ENCODE measurements at regions of chr5 and their contacts with region 1.

Region 1: GRCh38 chr5:164013077-164013670 is 507.8 kb downstream of the MAT2B start:
- DNase-seq: peak; percentile 51
- H3K4me3 ChIP-seq: no peak overlapping the region
- H3K27ac ChIP-seq: no peak overlapping the region
- H3K4me1 ChIP-seq: no peaks in the 10 kb centered on the region
- H3K27me3 ChIP-seq: peaks cover 3% of the 10 kb centered on the region
- CTCF ChIP-seq: peak; percentile 46 to 64

Region 2: GRCh38 chr5:163564321-163564938 is 448.7 kb before region 1 on chr5:
- CTCF ChIA-PET with region 1: interaction called, 4 read pairs
- dilution Hi-C with region 1: no loop called
- in situ Hi-C with region 1: loop called in 1 of 2 experiments (anchors 25 kb)
- intact Hi-C with region 1: loop called (anchors 2 kb)
- DNase-seq: peak; percentile 42
- H3K4me3 ChIP-seq: no peak overlapping the region
- H3K27ac ChIP-seq: no peak overlapping the region
- H3K4me1 ChIP-seq: peaks cover 9% of the 10 kb centered on the region
- H3K27me3 ChIP-seq: no peaks in the 10 kb centered on the region
- CTCF ChIP-seq: peak; percentile 77 to 90

Region 3: DNA sequence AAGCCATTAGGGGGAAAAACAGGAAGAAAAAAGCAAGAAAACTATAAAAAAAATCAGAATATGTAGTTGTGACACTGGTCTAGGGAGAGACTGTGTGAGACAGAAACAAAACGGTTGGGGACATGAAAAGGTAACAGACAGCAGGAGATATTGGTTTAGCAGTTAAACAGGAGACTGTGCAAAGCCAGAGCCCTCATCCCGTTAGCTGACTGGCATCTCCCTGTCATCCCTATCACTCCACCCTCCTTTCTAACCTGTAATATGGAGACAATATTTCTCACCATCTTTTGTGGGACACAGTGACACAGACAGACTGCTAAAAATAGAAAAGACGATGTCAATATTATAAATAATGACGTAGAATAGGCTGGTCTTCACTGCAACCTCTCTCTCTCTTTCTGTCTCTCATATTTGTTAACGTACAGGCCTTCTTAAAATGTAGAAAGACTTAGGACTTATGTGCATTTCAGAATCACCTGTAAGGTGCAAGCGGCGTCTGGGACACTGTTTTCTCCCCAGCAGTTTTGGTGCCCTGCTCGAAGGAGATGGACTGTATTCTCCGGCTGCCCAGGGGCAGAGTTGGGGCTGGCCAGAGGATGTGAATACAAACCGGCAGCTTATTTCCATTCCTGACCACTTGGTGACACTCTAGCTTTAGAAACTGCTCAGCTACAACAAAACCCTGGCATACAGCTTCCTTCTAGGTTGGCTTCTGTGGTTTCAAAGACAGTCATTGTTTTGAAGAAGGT is 317.2 kb before region 1 on chr5:
- CTCF ChIA-PET with region 1: interaction called, 3 read pairs
- dilution Hi-C with region 1: no loop called
- in situ Hi-C with region 1: no loop called
- intact Hi-C with region 1: loop called (anchors 2 kb)
- DNase-seq: peak; percentile 68
- H3K4me3 ChIP-seq: no peak overlapping the region
- H3K27ac ChIP-seq: no peak overlapping the region
- H3K4me1 ChIP-seq: peaks cover 3% of the 10 kb centered on the region
- H3K27me3 ChIP-seq: no peaks in the 10 kb centered on the region
- CTCF ChIP-seq: peak; percentile 78 to 81

Region 4: DNA sequence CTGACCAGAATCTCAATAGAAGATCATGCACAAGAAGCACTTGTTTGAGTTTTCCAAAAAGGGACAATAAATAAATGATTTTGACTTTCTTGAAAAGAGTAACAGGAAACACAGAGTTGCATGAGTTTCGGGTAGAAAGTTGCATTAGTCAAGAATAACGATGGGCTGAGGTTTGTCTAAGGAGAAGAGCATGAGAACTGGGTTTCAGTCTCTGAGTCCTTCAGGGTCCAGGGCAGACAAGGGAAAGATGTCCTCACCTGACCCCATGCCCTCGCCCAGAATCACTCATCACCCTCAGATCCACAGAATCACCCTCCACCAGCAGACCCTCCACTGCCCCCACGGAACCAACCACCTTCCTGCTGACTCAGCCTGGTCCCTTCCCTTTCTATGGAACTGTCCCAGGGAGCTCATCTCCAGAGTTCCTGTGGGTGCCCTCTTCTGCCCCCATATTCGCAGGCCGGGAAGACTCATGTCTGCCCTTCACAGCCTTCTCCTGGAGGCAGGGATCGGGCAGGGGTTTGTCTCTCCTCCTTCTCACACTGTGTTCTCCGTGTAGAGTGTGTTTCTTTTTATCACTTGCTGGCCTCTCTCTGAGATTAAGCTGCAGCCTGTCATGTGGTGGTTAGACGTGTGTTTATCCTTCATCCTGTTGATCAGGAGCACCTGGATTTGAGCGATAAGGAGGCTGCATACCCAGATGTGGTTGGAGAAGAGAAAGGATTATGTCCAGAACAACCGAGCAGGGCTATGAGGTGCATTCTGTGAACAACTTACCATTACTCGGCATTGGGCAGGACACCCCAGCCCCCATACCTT is 65.1 kb before region 1 on chr5:
- CTCF ChIA-PET with region 1: no interaction called
- dilution Hi-C with region 1: no loop called
- in situ Hi-C with region 1: no loop called
- intact Hi-C with region 1: no loop called
- DNase-seq: no peak
- H3K4me3 ChIP-seq: no peak overlapping the region
- H3K27ac ChIP-seq: no peak overlapping the region
- H3K4me1 ChIP-seq: no peaks in the 10 kb centered on the region
- H3K27me3 ChIP-seq: peaks cover 2% of the 10 kb centered on the region
- CTCF ChIP-seq: no peak

Region 5: GRCh38 chr5:164175083-164175482 is 161.9 kb after region 1 on chr5:
- CTCF ChIA-PET with region 1: no interaction called
- dilution Hi-C with region 1: no loop called
- in situ Hi-C with region 1: no loop called
- intact Hi-C with region 1: no loop called
- DNase-seq: peak; percentile 0
- H3K4me3 ChIP-seq: no peak overlapping the region
- H3K27ac ChIP-seq: no peak overlapping the region
- H3K4me1 ChIP-seq: no peaks in the 10 kb centered on the region
- H3K27me3 ChIP-seq: no peaks in the 10 kb centered on the region
- CTCF ChIP-seq: no peak

Region 6: GRCh38 chr5:164277720-164278119 is 264.5 kb after region 1 on chr5:
- CTCF ChIA-PET with region 1: no interaction called
- dilution Hi-C with region 1: no loop called
- in situ Hi-C with region 1: no loop called
- intact Hi-C with region 1: no loop called
- DNase-seq: peak; percentile 22
- H3K4me3 ChIP-seq: no peak overlapping the region
- H3K27ac ChIP-seq: no peak overlapping the region
- H3K4me1 ChIP-seq: no peaks in the 10 kb centered on the region
- H3K27me3 ChIP-seq: no peaks in the 10 kb centered on the region
- CTCF ChIP-seq: no peak

Region 7: DNA sequence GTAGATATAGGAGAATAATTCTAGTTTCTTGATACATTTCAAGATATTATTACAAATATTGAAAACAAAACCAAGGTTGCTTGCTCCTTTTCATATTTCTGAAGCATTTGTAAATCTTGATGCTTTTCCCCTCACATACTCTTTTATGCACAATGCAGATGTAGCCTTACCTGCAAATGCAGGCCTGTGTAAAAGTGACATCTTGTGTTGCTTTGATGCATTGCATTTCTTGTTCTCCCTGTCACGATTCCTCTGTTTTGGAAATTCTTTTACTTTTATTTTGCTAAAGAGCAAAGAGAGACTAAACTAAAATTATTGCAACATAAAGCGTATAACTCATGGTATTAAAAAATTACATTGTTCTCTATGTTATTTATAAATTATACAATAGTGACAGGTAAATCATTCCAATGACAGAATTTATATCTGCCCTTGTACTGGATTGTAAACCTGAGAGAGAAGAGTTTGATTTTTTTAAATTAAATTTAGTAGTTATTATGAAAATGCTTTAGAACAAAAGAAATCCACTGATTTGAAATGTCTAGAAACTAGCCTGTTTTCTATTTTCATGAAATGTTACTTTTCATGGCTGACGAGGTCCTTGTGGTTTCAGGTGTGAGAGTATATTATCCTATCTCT is 462.3 kb after region 1 on chr5:
- CTCF ChIA-PET with region 1: no interaction called
- dilution Hi-C with region 1: no loop called
- in situ Hi-C with region 1: loop called in 1 of 2 experiments (anchors 10 kb)
- intact Hi-C with region 1: loop called (anchors 1 kb)
- DNase-seq: peak; percentile 3
- H3K4me3 ChIP-seq: no peak overlapping the region
- H3K27ac ChIP-seq: no peak overlapping the region
- H3K4me1 ChIP-seq: no peaks in the 10 kb centered on the region
- H3K27me3 ChIP-seq: no peaks in the 10 kb centered on the region
- CTCF ChIP-seq: peak; percentile 70 to 82

Region 8: GRCh38 chr5:164504141-164504772 is 491.1 kb after region 1 on chr5:
- CTCF ChIA-PET with region 1: no interaction called
- dilution Hi-C with region 1: no loop called
- in situ Hi-C with region 1: no loop called
- intact Hi-C with region 1: loop called (anchors 1 kb)
- DNase-seq: peak; percentile 34
- H3K4me3 ChIP-seq: no peak overlapping the region
- H3K27ac ChIP-seq: no peak overlapping the region
- H3K4me1 ChIP-seq: no peaks in the 10 kb centered on the region
- H3K27me3 ChIP-seq: peaks cover 5% of the 10 kb centered on the region
- CTCF ChIP-seq: peak; percentile 75 to 84

Region 9: GRCh38 chr5:164672931-164673694 is 659.9 kb after region 1 on chr5:
- CTCF ChIA-PET with region 1: no interaction called
- dilution Hi-C with region 1: no loop called
- in situ Hi-C with region 1: no loop called
- intact Hi-C with region 1: loop called (anchors 1 kb)
- DNase-seq: peak; percentile 5
- H3K4me3 ChIP-seq: no peak overlapping the region
- H3K27ac ChIP-seq: no peak overlapping the region
- H3K4me1 ChIP-seq: no peaks in the 10 kb centered on the region
- H3K27me3 ChIP-seq: no peaks in the 10 kb centered on the region
- CTCF ChIP-seq: peak; percentile 28 to 50

Region 10: GRCh38 chr5:165457859-165458481 is 1444.8 kb after region 1 on chr5:
- CTCF ChIA-PET with region 1: no interaction called
- dilution Hi-C with region 1: no loop called
- in situ Hi-C with region 1: no loop called
- intact Hi-C with region 1: loop called (anchors 1 kb)
- DNase-seq: peak; percentile 33
- H3K4me3 ChIP-seq: no peak overlapping the region
- H3K27ac ChIP-seq: no peak overlapping the region
- H3K4me1 ChIP-seq: no peaks in the 10 kb centered on the region
- H3K27me3 ChIP-seq: no peaks in the 10 kb centered on the region
- CTCF ChIP-seq: peak; percentile 73 to 77

Measured in mammary epithelial cell (primary cell).